ENCODE measurements at regions of chr16 and their contacts with region 1.

Region 1: GRCh38 chr16:28063641-28064061 is at the start of gene GSG1L:
- DNase-seq: no peak
- H3K4me3 ChIP-seq: no peak within 1 kb of the TSS
- H3K27ac ChIP-seq: no peak within 1 kb of the TSS
- H3K4me1 ChIP-seq: no peaks in the 10 kb centered on the region
- H3K27me3 ChIP-seq: no peaks in the 10 kb centered on the region
- CTCF ChIP-seq: no peak
- EP300 ChIP-seq: no peak
- POLR2A ChIP-seq: no peak
- total RNA-seq, gene GSG1L: 0.46 to 1.1 (median 0.72) TPM in 3 of 7 donors, not detected in the others

Region 2: DNA sequence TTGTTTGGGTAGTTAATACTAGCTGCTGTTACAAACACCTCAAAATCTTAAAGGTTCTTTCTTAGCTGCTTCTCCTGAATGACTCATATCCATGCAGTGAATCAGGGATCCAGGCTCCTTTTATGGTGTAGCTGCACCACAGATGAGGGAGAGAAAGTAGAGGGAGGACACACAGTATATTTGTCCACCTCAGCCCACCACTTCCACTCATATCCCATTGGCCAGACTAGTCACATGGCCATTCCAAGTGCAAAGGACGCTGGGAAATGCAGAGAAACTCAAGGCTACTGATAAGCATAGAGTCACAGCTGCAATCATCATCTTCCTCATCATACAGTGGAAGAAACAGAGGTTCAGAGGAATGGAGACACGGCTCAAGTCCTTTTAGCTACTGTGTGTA is 64.0 kb before region 1 on chr16:
- intact Hi-C with region 1: loop called in 1 of 4 experiments (anchors 10 kb)
- DNase-seq: no peak
- H3K4me3 ChIP-seq: no peak overlapping the region
- H3K27ac ChIP-seq: no peak overlapping the region
- H3K4me1 ChIP-seq: no peaks in the 10 kb centered on the region
- H3K27me3 ChIP-seq: no peaks in the 10 kb centered on the region
- CTCF ChIP-seq: no peak
- EP300 ChIP-seq: no peak
- POLR2A ChIP-seq: no peak

Region 3: DNA sequence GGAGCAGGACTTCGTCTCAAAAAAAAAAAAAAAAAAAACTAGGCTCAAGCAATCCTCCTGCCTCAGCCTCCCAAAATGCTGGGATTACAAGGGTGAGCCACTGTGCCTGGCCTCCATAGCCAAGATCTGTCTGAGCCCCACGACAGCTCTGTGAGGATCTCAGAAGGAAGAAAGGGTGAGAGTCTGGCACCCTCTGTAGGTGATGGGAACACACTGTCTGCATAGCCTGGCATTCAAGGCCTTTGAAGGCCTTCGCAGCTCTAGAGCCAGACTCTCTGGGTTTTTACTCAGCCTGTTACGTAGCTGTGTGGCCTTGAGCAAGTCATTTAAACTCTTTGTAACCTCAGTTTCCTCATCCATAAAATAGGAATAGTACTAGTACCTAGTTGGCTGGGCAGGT is 154.5 kb after region 1 on chr16:
- intact Hi-C with region 1: no loop called
- DNase-seq: no peak
- H3K4me3 ChIP-seq: no peak overlapping the region
- H3K27ac ChIP-seq: no peak overlapping the region
- H3K4me1 ChIP-seq: no peaks in the 10 kb centered on the region
- H3K27me3 ChIP-seq: no peaks in the 10 kb centered on the region
- CTCF ChIP-seq: no peak
- EP300 ChIP-seq: no peak
- POLR2A ChIP-seq: no peak